WTC11 (cell line): ENCODE measurements at regions of chr14 and their contacts with region 1.

Region 1: GRCh38 chr14:56491299-56492285 is 88.0 kb upstream of the TMEM260 start:
- DNase-seq: peak; percentile 72
- ATAC-seq: peak; percentile 95
- H3K4me3 Mint-ChIP-seq: no peak overlapping the region
- H3K27ac Mint-ChIP-seq: no peak overlapping the region
- H3K4me1 Mint-ChIP-seq: peaks cover 18% of the 10 kb centered on the region
- H3K27me3 Mint-ChIP-seq: no peaks in the 10 kb centered on the region; the same call in 1 of the 2 replicates
- CTCF ChIP-seq: peak; percentile 64

Region 2: DNA sequence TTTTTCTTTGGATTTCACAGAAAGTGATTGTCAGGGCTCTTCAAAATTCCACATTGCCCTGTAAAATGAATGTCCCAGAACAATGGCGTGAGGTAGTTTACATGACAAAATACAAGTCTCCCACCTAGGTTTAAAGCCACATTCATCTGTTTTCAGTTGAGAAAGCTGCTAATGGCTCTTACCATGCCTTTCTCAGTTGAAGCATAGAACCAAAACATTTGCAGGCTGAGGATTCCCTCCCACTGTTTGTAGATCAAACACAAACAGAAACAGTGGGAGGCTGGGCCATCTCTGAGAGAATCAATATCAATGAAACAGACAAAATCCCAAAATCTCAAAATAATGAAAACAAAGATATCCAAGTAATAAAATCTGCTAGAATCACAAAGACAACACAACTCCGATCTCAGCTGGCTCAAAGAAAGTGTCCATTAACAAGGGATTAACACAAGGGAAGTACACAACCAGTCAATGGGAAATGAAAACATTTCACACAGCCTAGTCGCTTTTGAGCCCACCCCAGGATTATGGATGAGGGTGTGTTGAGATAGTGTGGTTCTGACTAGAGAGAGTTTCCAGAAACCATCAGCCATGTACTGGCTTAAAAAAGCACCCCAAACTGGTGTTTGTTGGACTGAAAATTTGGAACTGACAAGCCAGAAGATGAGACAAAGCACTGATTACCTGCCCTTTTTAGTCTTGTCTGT is 33.5 kb after region 1 on chr14:
- CTCF ChIA-PET with region 1: interaction called, 15 read pairs
- POLR2A ChIA-PET with region 1: no interaction called
- DNase-seq: no peak
- ATAC-seq: peak; percentile 83
- H3K4me3 Mint-ChIP-seq: no peak overlapping the region
- H3K27ac Mint-ChIP-seq: peak overlapping the region; percentile 71
- H3K4me1 Mint-ChIP-seq: peaks cover 16% of the 10 kb centered on the region
- H3K27me3 Mint-ChIP-seq: peaks cover 53% of the 10 kb centered on the region
- CTCF ChIP-seq: no peak

Region 3: GRCh38 chr14:56552615-56553014 is 61.0 kb after region 1 on chr14:
- CTCF ChIA-PET with region 1: interaction called, 85 read pairs
- POLR2A ChIA-PET with region 1: no interaction called
- DNase-seq: peak; percentile 29
- ATAC-seq: peak; percentile 86
- H3K4me3 Mint-ChIP-seq: no peak overlapping the region
- H3K27ac Mint-ChIP-seq: no peak overlapping the region
- H3K4me1 Mint-ChIP-seq: peaks cover 16% of the 10 kb centered on the region
- H3K27me3 Mint-ChIP-seq: no peaks in the 10 kb centered on the region
- CTCF ChIP-seq: no peak

Region 4: GRCh38 chr14:56579345-56580220 is 88.0 kb after region 1 on chr14 and contains the start of gene TMEM260:
- CTCF ChIA-PET with region 1: interaction called, 20 read pairs
- POLR2A ChIA-PET with region 1: no interaction called
- DNase-seq: peak; percentile 92
- ATAC-seq: peak; percentile 92
- H3K4me3 Mint-ChIP-seq: peak within 1 kb of the TSS; percentile 91
- H3K27ac Mint-ChIP-seq: peak within 1 kb of the TSS; percentile 95
- H3K4me1 Mint-ChIP-seq: peaks cover 11% of the 10 kb centered on the region
- H3K27me3 Mint-ChIP-seq: no peaks in the 10 kb centered on the region; the same call in 1 of the 2 replicates
- CTCF ChIP-seq: peak; percentile 72
- total RNA-seq, gene TMEM260: 17.9 to 22.5 TPM (median 20.4 TPM) in 3 replicates

Region 5: DNA sequence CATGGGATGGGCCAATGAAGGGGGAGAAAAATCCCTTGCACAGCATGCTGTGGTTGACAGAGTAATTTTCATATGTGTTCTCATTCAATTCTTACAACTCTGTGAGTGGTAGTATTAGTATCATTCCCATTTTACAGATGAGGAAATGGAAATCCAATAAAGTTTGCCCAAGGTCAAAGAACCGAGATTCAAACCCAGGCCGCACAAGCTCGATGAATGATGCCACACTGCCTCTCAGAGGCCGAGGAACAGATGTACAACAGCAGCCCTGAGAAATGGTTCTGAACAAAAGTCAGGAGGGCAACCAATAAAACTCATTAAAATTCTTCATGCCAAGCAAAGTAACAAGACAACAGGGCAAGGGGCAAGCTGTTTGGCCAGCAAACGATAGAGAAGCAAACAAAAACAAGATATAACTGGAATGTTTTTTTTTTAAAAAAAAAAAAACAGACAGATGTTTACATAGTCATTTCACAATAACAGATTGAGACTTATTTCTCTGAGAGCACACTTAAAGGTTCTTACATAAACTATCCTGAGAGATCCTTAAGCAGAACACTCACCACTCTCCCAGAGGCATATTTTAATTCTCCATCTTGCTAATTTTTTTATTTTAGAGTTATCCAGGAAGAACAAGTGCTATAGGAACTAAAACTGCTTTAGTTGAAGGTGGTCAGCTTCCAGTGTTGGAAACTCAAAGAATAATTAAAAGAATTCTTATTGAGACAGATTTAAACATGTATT is 691.3 kb after region 1 on chr14:
- CTCF ChIA-PET with region 1: interaction called, 17 read pairs
- POLR2A ChIA-PET with region 1: no interaction called
- DNase-seq: peak; percentile 45
- ATAC-seq: peak; percentile 76
- H3K4me3 Mint-ChIP-seq: no peak overlapping the region
- H3K27ac Mint-ChIP-seq: no peak overlapping the region
- H3K4me1 Mint-ChIP-seq: no peaks in the 10 kb centered on the region; the same call in 1 of the 2 replicates
- H3K27me3 Mint-ChIP-seq: no peaks in the 10 kb centered on the region; the same call in 1 of the 2 replicates
- CTCF ChIP-seq: peak; percentile 22; the same call in 1 of the 2 replicates

Region 6: DNA sequence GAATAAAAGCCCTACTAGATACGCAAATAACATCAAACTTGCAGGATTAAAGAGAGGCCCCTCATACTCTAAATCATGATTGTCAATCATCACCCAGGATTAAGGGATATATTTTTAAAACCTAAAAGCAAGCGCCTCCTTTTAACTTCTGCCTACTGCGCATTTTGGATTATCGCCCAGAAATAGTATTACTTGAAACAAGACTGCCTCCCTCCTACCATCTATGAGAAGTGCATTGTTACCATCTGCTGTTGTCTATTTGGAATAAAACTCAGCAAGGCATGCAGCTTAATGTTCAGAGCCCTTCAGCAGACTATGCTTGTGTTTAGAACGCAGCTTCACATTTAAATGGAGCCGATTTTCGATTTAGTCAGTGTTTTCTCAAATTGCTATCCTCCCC is 697.5 kb after region 1 on chr14:
- CTCF ChIA-PET with region 1: interaction called, 17 read pairs
- POLR2A ChIA-PET with region 1: no interaction called
- DNase-seq: no peak
- ATAC-seq: peak; percentile 43; the same call in 1 of the 2 replicates
- H3K4me3 Mint-ChIP-seq: no peak overlapping the region
- H3K27ac Mint-ChIP-seq: no peak overlapping the region
- H3K4me1 Mint-ChIP-seq: peaks cover 5% of the 10 kb centered on the region; the same call in 1 of the 2 replicates
- H3K27me3 Mint-ChIP-seq: no peaks in the 10 kb centered on the region
- CTCF ChIP-seq: no peak